ENCODE measurements at regions of chr3 and their contacts with region 1.

Region 1: GRCh38 chr3:150495563-150496168 is 50.6 kb downstream of the SERP1 start:
- DNase-seq: no peak
- H3K4me3 Mint-ChIP-seq: no peak overlapping the region
- H3K27ac Mint-ChIP-seq: no peak overlapping the region
- H3K4me1 Mint-ChIP-seq: no peaks in the 10 kb centered on the region
- H3K27me3 Mint-ChIP-seq: peaks cover 11% of the 10 kb centered on the region

Region 2: GRCh38 chr3:150286390-150287147 is 209.1 kb before region 1 on chr3:
- CTCF ChIA-PET with region 1: interaction called, 15 read pairs
- DNase-seq: no peak
- H3K4me3 Mint-ChIP-seq: no peak overlapping the region
- H3K27ac Mint-ChIP-seq: no peak overlapping the region
- H3K4me1 Mint-ChIP-seq: no peaks in the 10 kb centered on the region
- H3K27me3 Mint-ChIP-seq: peaks cover 19% of the 10 kb centered on the region

Region 3: GRCh38 chr3:150371741-150372254 is 123.9 kb before region 1 on chr3:
- CTCF ChIA-PET with region 1: no interaction called
- DNase-seq: no peak
- H3K4me3 Mint-ChIP-seq: no peak overlapping the region
- H3K27ac Mint-ChIP-seq: no peak overlapping the region
- H3K4me1 Mint-ChIP-seq: peaks cover 3% of the 10 kb centered on the region
- H3K27me3 Mint-ChIP-seq: peaks cover 4% of the 10 kb centered on the region

Region 4: GRCh38 chr3:150410311-150411105 is 85.2 kb before region 1 on chr3:
- CTCF ChIA-PET with region 1: interaction called, 12 read pairs
- DNase-seq: peak; percentile 55
- H3K4me3 Mint-ChIP-seq: peak overlapping the region; percentile 89
- H3K27ac Mint-ChIP-seq: peak overlapping the region; percentile 68
- H3K4me1 Mint-ChIP-seq: peaks cover 54% of the 10 kb centered on the region
- H3K27me3 Mint-ChIP-seq: peaks cover 9% of the 10 kb centered on the region